ENCODE measurements at regions of chr3 and their contacts with region 1.

Region 1: DNA sequence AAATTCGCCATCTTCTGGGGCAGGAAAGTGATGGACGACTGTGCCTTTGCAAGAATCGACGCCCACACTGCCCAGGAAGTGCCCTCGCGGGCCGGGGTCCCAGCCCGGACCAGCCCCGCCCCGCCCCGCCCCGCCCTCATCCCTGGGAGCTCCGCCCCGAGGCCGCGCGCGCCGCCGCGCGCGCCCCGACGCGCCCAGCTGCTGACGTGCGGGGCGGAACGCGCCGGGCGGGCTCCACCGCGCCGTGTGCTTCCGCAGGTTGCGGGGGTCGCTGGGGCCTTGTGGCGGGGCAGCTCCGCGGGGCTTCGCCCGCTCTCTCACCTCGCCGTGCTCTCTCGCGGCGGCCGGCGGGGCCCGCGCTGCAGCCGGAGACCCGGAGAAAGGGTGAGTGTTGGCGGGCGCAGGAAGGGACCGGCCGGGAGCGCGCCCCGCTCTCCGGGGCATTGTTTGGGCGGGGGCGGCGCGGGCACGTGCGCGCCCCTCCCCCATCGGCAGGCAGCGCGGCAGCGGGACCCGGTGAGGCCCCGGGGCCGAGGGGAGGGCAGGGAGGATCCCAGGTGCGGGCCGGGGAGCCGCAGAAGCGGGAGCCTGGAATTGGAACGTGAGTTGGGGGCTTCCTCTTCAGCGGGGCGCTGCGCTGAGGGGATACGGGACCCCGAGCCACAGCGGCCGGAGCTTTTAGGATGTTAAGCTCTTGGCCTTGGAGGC is at the start of gene YEATS2:
- DNase-seq: peak; percentile 80
- H3K4me3 ChIP-seq: peak within 1 kb of the TSS; percentile 98
- H3K27ac ChIP-seq: peak within 1 kb of the TSS; percentile 93
- H3K4me1 ChIP-seq: no peaks in the 10 kb centered on the region
- H3K27me3 ChIP-seq: no peaks in the 10 kb centered on the region
- CTCF ChIP-seq: no peak
- total RNA-seq, gene YEATS2: 39.9 and 40.7 TPM in 2 replicates

Region 2: DNA sequence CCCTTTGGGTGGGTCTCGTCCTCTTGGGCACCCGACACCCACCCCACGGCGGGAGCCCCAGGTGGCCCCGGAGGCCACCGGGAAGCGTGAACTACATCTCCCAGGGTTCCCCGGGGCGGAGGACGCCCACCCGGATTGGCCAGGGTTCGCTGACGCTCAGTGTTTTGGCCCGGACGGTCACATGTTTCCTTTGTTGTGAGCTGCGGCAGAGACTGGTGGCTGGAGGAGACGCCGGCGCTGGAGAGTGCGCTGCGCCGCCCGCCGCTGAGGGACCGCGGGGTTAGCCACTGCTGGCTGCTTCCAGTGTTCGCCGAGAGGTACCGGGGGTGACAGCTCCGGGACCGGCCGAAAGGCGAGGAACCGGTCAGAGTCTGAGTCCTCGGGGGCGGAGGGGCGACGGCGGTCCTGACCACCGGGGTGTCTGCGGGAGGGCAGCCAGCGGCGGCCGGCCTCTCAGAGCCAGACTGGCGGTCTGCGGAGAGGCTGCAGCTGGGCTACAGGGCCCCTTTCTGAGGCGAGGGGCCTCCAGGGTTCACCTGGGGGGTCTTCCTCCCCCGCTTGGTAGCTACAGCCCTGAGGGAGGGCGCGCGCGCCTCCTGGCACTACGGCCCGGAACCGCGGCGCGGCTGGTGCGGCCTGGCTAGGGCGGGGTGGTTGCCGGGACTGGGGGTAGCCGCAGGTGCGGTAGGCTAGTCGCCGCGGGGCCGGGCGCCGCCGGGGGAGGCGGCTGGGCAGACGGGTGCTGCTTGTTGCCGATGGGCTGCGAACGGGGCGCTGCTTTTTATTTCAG is 62.1 kb before region 1 on chr3 and contains the start of gene KLHL24:
- CTCF ChIA-PET with region 1: no interaction called
- POLR2A ChIA-PET with region 1: no interaction called
- intact Hi-C with region 1: loop called (anchors 5 kb)
- DNase-seq: peak; percentile 95
- H3K4me3 ChIP-seq: peak within 1 kb of the TSS; percentile 92
- H3K27ac ChIP-seq: peak within 1 kb of the TSS; percentile 79
- H3K4me1 ChIP-seq: peaks cover 9% of the 10 kb centered on the region
- H3K27me3 ChIP-seq: no peaks in the 10 kb centered on the region
- CTCF ChIP-seq: no peak
- total RNA-seq, gene KLHL24: 7.3 and 10.2 TPM in 2 replicates

Region 3: GRCh38 chr3:184196536-184196935 is 498.8 kb after region 1 on chr3:
- CTCF ChIA-PET with region 1: no interaction called
- POLR2A ChIA-PET with region 1: no interaction called
- intact Hi-C with region 1: no loop called
- DNase-seq: no peak
- H3K4me3 ChIP-seq: no peak overlapping the region
- H3K27ac ChIP-seq: no peak overlapping the region
- H3K4me1 ChIP-seq: no peaks in the 10 kb centered on the region
- H3K27me3 ChIP-seq: no peaks in the 10 kb centered on the region
- CTCF ChIP-seq: no peak

Measured in A673 (cell line).